PC-9 (cell line): ENCODE measurements at regions of chr1 and their contacts with region 1.

Region 1: GRCh38 chr1:52920791-52921291 is 699 bp downstream of the ECHDC2 start:
- DNase-seq: no peak
- H3K4me3 ChIP-seq: no peak overlapping the region
- H3K27ac ChIP-seq: no peak overlapping the region
- H3K4me1 ChIP-seq: no peaks in the 10 kb centered on the region; the same call in 1 of the 2 replicates
- H3K27me3 ChIP-seq: no peaks in the 10 kb centered on the region
- CTCF ChIP-seq: no peak

Region 2: GRCh38 chr1:52726265-52727113 is 194.4 kb before region 1 on chr1 and contains the start of gene ZYG11B:
- CTCF ChIA-PET with region 1: interaction called, 12 read pairs
- POLR2A ChIA-PET with region 1: no interaction called
- intact Hi-C with region 1: no loop called
- DNase-seq: peak; percentile 63 to 91
- H3K4me3 ChIP-seq: peak within 1 kb of the TSS; percentile 87
- H3K27ac ChIP-seq: no peak within 1 kb of the TSS
- H3K4me1 ChIP-seq: peaks cover 13% of the 10 kb centered on the region
- H3K27me3 ChIP-seq: no peaks in the 10 kb centered on the region
- CTCF ChIP-seq: no peak
- total RNA-seq, gene ZYG11B: 18.6 and 21.4 TPM in 2 replicates

Region 3: GRCh38 chr1:53238197-53239155 is 317.6 kb after region 1 on chr1 and contains the start of gene MAGOH:
- CTCF ChIA-PET with region 1: no interaction called
- POLR2A ChIA-PET with region 1: interaction called, 14 read pairs
- intact Hi-C with region 1: no loop called
- DNase-seq: peak; percentile 92 to 94
- H3K4me3 ChIP-seq: peak within 1 kb of the TSS; percentile 76
- H3K27ac ChIP-seq: peak within 1 kb of the TSS; percentile 71
- H3K4me1 ChIP-seq: peaks cover 27% of the 10 kb centered on the region
- H3K27me3 ChIP-seq: no peaks in the 10 kb centered on the region
- CTCF ChIP-seq: no peak
- total RNA-seq, gene MAGOH: 48.0 and 75.7 TPM in 2 replicates

Region 4: GRCh38 chr1:54528613-54529012 is 1607.8 kb after region 1 on chr1:
- CTCF ChIA-PET with region 1: no interaction called
- POLR2A ChIA-PET with region 1: no interaction called
- intact Hi-C with region 1: no loop called
- DNase-seq: no peak
- H3K4me3 ChIP-seq: no peak overlapping the region
- H3K27ac ChIP-seq: no peak overlapping the region
- H3K4me1 ChIP-seq: no peaks in the 10 kb centered on the region
- H3K27me3 ChIP-seq: no peaks in the 10 kb centered on the region
- CTCF ChIP-seq: no peak